Adrenal gland (tissue), 19 donors: ENCODE measurements at regions of chr7 and their contacts with region 1.

Region 1: DNA sequence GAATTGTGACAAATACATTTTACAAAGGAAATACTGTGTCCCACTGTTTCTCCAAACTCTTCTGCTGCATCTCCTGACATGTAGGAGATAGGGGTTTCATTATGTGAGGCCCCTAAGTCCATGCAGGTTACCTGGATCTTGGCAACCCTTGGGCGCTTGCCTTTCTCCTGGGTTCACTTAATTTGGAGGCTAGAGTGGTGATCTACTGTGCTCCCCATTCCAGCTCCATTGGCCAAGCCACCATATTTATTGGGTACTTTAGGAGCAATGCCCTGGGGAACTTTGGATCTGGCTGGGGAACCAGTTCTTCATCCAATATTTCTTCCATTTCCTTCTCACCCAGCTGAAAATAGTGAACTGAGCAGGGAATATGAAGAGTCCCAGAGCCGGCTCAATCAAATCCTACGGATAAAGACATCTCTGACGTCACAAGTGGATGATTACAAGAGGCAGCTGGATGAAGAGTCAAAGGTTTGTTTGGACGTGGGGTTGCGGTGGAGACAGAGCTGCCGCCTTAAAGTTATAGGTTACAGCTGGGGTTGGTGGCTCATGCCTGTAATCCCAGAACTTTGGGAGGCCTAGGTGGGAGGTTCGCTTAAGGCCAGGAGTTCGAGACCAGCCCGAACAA is 18.5 kb downstream of the MYH16 start:
- DNase-seq: peak in 1 of 7 donors; percentile 22
- H3K4me3 ChIP-seq: no peak overlapping the region
- H3K27ac ChIP-seq: peak overlapping the region in 1 of 5 donors; percentile 45
- H3K4me1 ChIP-seq: no peaks in the 10 kb centered on the region
- H3K27me3 ChIP-seq: no peaks in the 10 kb centered on the region
- CTCF ChIP-seq: no peak
- POLR2A ChIP-seq: no peak

Region 2: DNA sequence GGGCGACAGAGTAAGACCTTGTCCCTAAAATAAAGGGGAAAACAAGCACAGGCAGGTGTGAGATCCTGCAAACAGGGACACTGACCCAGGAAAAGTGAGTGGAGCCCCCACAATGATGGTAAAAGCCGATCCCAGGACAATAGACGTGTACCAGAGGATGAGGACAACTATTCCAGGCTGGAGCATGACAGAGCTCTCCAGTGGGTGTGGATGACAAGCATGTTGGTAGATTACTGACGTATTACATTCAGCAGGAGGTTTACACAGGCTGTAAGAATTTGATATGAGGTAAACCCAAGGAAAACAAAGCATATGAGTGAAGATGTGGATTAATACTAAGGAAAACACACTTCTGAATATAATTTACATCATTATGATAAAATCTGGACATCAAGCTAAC is 119.4 kb before region 1 on chr7:
- intact Hi-C with region 1: loop called in 1 of 2 experiments (anchors 10 kb)
- DNase-seq: no peak
- H3K4me3 ChIP-seq: no peak overlapping the region
- H3K27ac ChIP-seq: no peak overlapping the region
- H3K4me1 ChIP-seq: no peaks in the 10 kb centered on the region
- H3K27me3 ChIP-seq: no peaks in the 10 kb centered on the region
- CTCF ChIP-seq: no peak
- POLR2A ChIP-seq: no peak

Region 3: DNA sequence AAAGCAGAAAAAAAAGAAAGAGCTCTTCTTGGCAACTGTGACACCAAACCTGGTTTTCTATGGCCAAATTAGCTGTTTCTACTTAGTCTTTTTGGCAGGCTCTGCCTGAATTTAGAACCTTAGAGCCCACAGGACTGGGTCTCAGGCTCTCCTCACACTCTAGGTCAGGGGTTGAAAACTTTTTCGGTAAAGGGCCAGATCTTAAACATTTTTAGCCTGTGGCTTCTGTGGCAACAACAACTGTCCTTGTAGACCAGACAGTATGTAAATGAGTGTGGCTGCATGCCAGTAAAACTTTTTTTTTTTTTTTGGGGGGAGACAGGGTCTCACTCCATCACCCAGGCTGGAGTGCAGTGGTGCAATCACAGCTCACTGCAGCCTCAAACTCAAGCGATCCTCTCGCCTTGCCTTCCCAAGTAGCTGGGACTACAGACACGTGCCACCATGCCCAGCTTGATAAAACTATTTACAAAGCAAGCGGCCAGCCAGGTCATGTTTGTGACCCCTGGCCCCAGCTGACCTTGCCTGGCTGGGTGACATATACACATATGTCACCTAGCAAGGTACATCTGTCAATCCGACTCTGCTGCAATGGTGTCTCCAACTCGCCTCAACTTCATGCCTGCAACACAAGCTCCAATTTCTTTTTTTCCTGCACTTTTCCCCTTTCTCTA is 100.6 kb before region 1 on chr7:
- intact Hi-C with region 1: no loop called
- DNase-seq: no peak
- H3K4me3 ChIP-seq: no peak overlapping the region
- H3K27ac ChIP-seq: no peak overlapping the region
- H3K4me1 ChIP-seq: no peaks in the 10 kb centered on the region
- H3K27me3 ChIP-seq: no peaks in the 10 kb centered on the region
- CTCF ChIP-seq: no peak
- POLR2A ChIP-seq: no peak